Dorsolateral prefrontal cortex (tissue), 120 donors: ENCODE measurements at regions of chr5 and their contacts with region 1.

Region 1: DNA sequence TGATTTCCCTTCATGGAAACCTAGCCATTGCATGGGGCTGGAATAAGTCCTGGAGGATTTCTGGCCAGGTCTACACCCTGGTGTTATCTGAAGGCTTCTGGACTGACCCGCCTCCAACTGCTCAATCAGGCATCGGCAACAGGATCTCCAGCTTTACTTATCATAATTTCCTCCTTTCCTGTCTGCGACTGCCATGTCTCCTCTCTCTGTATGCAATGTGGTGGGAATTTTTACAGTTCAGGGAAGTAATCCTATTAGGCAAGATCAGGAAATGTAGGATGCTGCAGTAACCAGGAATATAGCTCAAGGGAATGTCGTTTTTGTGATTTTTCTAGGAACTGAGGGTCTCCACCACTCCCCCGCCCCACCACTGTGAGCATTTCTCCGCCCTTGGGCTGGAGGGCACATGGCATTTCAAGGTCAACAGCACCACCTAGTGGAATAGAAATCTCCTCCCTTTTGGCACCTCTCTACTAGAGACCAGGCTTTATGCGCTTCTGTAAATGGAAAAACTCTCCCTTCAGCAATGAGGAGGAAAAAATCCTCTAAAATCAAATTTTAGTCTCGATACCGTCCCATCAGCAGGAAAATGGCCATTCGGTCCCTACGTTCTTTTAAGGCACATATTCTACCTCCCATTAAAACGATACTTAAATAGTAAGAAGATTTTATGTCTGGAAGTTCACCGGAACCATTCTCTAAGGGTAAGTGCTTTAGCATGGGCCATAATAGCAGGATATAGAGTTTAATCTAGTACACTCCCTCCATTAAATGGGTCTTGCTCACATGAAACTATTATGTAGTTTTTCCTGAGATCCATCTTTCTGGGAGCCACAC is 93.0 kb downstream of the YTHDC2 start:
- DNase-seq: peak in 5 of 10 donors; percentile 20 to 56 (median 42)
- H3K4me3 ChIP-seq: peak overlapping the region in 47 of 59 donors; percentile 1 to 56 (median 35)
- H3K27ac ChIP-seq: no peak overlapping the region
- H3K27me3 ChIP-seq: no peaks in the 10 kb centered on the region
- CTCF ChIP-seq: peak; percentile 68 to 99 (median 90)

Region 2: GRCh38 chr5:112995764-112996618 is 610.5 kb before region 1 on chr5:
- intact Hi-C with region 1: loop called in 1 of 2 experiments (anchors 5 kb)
- DNase-seq: peak in 9 of 10 donors; percentile 50 to 86 (median 69)
- H3K4me3 ChIP-seq: no peak overlapping the region
- H3K27ac ChIP-seq: no peak overlapping the region
- H3K27me3 ChIP-seq: no peaks in the 10 kb centered on the region
- CTCF ChIP-seq: peak; percentile 79 to 98 (median 92)

Region 3: DNA sequence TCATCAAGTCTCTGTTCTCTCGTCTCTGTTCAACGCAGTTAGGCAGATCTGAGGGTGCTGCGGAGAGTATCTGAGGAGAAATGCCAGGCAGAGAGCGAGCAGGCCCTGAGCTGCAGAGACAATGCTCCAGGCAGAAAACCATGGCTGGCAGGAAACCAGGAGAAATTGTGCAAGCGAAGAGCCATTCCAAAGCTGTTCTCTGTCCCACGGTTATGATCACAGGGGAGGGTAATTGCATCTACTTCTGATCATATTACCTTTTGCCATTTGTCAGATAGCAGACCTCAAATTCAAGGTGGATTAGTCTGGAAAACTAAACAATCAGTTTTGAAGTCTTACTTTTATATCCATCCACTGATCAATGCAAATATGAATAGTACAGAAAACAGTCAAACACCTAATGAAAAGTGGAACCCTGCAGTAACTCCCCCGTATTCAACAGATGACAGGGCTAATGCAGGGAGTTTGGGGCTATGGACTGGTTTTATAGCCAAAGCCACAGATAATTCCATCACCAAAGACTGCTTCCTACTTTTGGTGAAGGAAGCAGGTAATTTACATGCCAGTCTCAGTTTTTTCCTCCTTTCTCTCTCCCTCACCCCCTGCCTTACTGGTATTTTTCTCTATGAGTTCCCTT is 401.9 kb before region 1 on chr5:
- intact Hi-C with region 1: loop called in 1 of 2 experiments (anchors 5 kb)
- DNase-seq: peak in 5 of 10 donors; percentile 15 to 48 (median 25)
- H3K4me3 ChIP-seq: peak overlapping the region in 7 of 59 donors; percentile 0 to 19 (median 8)
- H3K27ac ChIP-seq: peak overlapping the region in 4 of 59 donors; percentile 1 to 52 (median 22)
- H3K27me3 ChIP-seq: no peaks in the 10 kb centered on the region
- CTCF ChIP-seq: no peak

Region 4: DNA sequence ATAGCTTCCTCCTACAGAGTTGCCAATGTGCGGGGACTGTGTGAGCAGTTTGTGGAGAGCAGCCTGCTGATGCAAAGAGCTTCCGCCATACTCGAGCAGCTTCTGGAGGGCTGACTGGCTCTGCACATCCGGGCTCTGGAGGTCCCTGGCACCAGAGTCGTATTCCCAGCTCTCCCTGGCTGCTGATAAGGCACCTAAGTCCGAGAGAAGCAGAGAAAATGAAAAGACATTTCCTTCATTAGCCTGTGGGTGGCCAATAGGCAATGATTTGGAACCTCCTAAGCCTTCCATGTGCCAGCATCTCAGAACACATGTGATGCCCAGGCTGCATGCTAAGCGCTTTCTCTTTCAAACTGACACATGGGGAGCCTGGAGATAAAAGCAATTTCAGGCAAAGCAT is 266.0 kb before region 1 on chr5:
- intact Hi-C with region 1: loop called in 1 of 2 experiments (anchors 2 kb)
- DNase-seq: peak in 3 of 10 donors; percentile 6 to 46 (median 38)
- H3K4me3 ChIP-seq: peak overlapping the region in 8 of 59 donors; percentile 0 to 21 (median 10)
- H3K27ac ChIP-seq: peak overlapping the region in 1 of 59 donors; percentile 20
- H3K27me3 ChIP-seq: no peaks in the 10 kb centered on the region
- CTCF ChIP-seq: peak in 2 of 56 donors; percentile 6 to 25

Region 5: GRCh38 chr5:113378959-113379541 is 227.5 kb before region 1 on chr5:
- intact Hi-C with region 1: loop called (anchors 2 to 5 kb)
- DNase-seq: peak in 8 of 10 donors; percentile 35 to 64 (median 51)
- H3K4me3 ChIP-seq: no peak overlapping the region
- H3K27ac ChIP-seq: no peak overlapping the region
- H3K27me3 ChIP-seq: no peaks in the 10 kb centered on the region
- CTCF ChIP-seq: peak; percentile 59 to 89 (median 79)

Region 6: GRCh38 chr5:113435575-113435974 is 170.9 kb before region 1 on chr5:
- intact Hi-C with region 1: no loop called
- DNase-seq: no peak
- H3K4me3 ChIP-seq: no peak overlapping the region
- H3K27ac ChIP-seq: no peak overlapping the region
- H3K27me3 ChIP-seq: no peaks in the 10 kb centered on the region
- CTCF ChIP-seq: no peak

Region 7: GRCh38 chr5:113447498-113448050 is 158.9 kb before region 1 on chr5:
- intact Hi-C with region 1: no loop called
- DNase-seq: peak in 1 of 10 donors; percentile 58
- H3K4me3 ChIP-seq: no peak overlapping the region
- H3K27ac ChIP-seq: no peak overlapping the region
- H3K27me3 ChIP-seq: no peaks in the 10 kb centered on the region
- CTCF ChIP-seq: no peak